WTC11 (cell line): ENCODE measurements at regions of chr9 and their contacts with region 1.

Region 1: GRCh38 chr9:107425101-107426045 is 64.2 kb downstream of the KLF4 start:
- DNase-seq: peak; percentile 79
- ATAC-seq: peak; percentile 76
- H3K4me3 Mint-ChIP-seq: peak overlapping the region; percentile 29; the same call in 1 of the 2 replicates
- H3K27ac Mint-ChIP-seq: no peak overlapping the region
- H3K4me1 Mint-ChIP-seq: peaks cover 5% of the 10 kb centered on the region
- H3K27me3 Mint-ChIP-seq: peaks cover 19% of the 10 kb centered on the region
- CTCF ChIP-seq: peak; percentile 97

Region 2: DNA sequence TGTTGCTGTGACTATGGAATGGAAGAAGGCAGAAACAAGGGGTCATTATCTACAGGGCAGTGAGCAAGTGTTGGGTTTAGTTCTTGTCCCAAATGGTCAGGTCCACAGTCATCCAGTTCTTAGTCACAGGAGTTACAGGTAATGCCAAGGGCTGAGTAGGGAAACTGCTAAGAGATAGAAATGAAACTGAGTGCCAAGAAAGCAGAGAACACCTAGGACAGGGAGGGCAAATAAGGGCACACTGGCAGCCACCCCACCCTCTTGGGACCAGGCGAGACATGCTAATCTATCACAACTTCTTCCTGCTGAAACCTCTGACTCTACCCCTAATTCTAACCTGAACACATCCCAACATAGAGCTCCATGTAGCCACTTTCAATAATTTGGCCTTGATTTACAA is 39.0 kb before region 1 on chr9:
- CTCF ChIA-PET with region 1: interaction called, 10 read pairs
- POLR2A ChIA-PET with region 1: no interaction called
- DNase-seq: no peak
- ATAC-seq: no peak
- H3K4me3 Mint-ChIP-seq: no peak overlapping the region
- H3K27ac Mint-ChIP-seq: no peak overlapping the region
- H3K4me1 Mint-ChIP-seq: no peaks in the 10 kb centered on the region
- H3K27me3 Mint-ChIP-seq: peaks cover 2% of the 10 kb centered on the region
- CTCF ChIP-seq: no peak

Region 3: DNA sequence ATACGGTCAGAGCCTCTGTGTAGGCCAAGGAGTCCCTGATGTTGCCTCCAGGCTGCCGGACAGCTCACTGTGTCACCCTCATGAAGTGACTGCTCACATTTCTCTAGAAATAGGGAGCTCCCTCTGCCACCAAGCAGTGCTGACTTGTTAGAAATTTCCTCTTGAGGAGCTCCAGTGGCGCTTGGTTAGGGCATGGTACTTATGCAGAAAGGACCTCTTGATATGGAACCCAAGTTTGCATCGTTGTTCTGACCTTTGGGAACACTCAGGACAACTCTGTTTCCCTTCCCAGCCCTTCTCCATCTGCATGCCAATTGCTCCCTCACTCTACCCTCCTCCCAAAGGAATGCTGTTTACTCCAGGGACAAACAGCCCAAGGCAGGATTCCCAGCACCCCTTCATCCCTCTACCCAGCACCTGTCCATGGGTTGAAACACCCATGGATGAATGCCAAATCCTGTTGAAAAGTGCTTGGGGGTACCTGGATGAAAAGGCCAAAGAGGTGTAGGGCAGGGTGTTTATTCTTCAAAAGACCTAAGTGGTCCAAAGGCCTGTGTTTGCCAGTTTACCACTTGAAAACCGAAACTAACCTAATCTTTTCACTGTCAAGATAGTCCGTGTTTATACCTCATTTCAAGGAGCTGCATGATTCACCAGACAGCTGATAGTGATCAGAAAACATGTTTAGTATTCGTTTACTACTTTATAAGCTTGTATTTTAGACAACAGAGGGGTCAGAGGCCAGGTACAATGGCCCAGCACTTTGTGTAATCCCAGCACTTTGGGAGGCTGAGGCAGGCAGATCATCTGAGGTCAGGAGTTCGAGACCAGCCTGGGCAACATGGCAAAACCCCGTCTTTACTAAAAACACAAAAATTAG is 13.1 kb after region 1 on chr9:
- CTCF ChIA-PET with region 1: interaction called, 29 read pairs
- POLR2A ChIA-PET with region 1: no interaction called
- DNase-seq: peak; percentile 65
- ATAC-seq: peak; percentile 98
- H3K4me3 Mint-ChIP-seq: no peak overlapping the region
- H3K27ac Mint-ChIP-seq: peak overlapping the region; percentile 98
- H3K4me1 Mint-ChIP-seq: peaks cover 22% of the 10 kb centered on the region
- H3K27me3 Mint-ChIP-seq: no peaks in the 10 kb centered on the region
- CTCF ChIP-seq: no peak

Region 4: DNA sequence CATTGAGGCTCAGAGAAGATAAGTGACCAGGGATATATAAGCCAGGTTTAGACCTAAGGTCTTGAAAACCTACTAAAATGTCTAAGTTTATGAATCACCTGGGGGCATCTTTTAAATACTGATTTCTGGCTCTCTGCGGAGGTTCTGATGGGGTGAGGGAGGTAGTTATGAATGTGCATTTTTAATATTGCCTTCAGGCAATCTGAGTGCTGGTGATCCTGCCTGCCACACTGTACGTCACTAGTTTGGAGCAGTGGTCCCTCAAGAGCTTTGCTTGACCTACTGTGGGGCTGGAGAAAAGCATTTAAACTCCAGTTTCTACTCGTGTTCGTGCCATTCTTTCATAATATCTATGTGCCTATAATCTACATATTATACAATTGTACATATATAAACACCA is 28.1 kb after region 1 on chr9:
- CTCF ChIA-PET with region 1: interaction called, 11 read pairs
- POLR2A ChIA-PET with region 1: no interaction called
- DNase-seq: no peak
- ATAC-seq: no peak
- H3K4me3 Mint-ChIP-seq: no peak overlapping the region
- H3K27ac Mint-ChIP-seq: no peak overlapping the region
- H3K4me1 Mint-ChIP-seq: no peaks in the 10 kb centered on the region
- H3K27me3 Mint-ChIP-seq: 0 out of 2 replicates have a peak, but pooled peaks cover under 1% of the 10 kb centered on the region
- CTCF ChIP-seq: no peak

Region 5: GRCh38 chr9:107465467-107466451 is 40.4 kb after region 1 on chr9:
- CTCF ChIA-PET with region 1: interaction called, 88 read pairs
- POLR2A ChIA-PET with region 1: interaction called, 6 read pairs
- DNase-seq: peak; percentile 79
- ATAC-seq: peak; percentile 98
- H3K4me3 Mint-ChIP-seq: peak overlapping the region; percentile 73
- H3K27ac Mint-ChIP-seq: no peak overlapping the region
- H3K4me1 Mint-ChIP-seq: peaks cover 10% of the 10 kb centered on the region
- H3K27me3 Mint-ChIP-seq: peaks cover 35% of the 10 kb centered on the region
- CTCF ChIP-seq: peak; percentile 74; the same call in 1 of the 2 replicates

Region 6: GRCh38 chr9:107489687-107490605 is 64.6 kb after region 1 on chr9 and contains the start of gene KLF4:
- CTCF ChIA-PET with region 1: interaction called, 52 read pairs
- POLR2A ChIA-PET with region 1: no interaction called
- DNase-seq: peak; percentile 80
- ATAC-seq: peak; percentile 49
- H3K4me3 Mint-ChIP-seq: peak within 1 kb of the TSS; percentile 85
- H3K27ac Mint-ChIP-seq: no peak within 1 kb of the TSS
- H3K4me1 Mint-ChIP-seq: peaks cover 39% of the 10 kb centered on the region
- H3K27me3 Mint-ChIP-seq: peaks cover 61% of the 10 kb centered on the region
- CTCF ChIP-seq: no peak
- total RNA-seq, gene KLF4: 5.9 to 8.9 TPM (median 7.6 TPM) in 3 replicates

Region 7: DNA sequence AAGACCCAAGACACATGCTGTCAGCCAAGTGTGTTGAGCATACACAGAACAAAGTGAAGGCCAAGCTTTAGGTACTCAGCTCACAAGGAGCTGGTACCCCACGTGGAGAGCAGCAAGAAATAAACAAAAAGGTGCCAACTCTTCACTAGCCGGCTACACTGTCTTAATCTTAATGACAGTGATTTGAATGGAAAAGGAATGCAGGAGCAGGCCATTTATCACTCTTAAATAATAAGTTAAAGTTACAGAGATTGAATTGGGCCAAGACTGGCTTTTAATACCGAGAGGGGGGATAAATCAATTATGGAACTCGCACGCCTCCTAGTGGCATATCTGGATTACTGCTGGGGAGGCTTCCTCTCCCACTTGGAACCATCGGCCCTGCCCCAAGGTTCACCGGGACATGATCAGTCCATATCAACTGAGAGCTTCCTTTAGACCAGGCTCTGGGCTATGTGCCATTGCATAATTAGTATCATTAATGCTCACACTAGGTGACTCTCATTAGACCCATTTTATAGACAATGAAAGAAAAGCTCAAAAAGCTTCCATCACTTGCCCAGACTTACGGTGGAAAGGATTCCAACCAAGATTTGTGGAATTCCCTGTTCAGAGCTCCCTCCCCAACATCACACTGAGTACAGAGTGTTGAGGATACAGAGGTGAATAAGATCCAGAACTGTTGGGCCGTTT is 1336.4 kb after region 1 on chr9:
- CTCF ChIA-PET with region 1: interaction called, 12 read pairs
- POLR2A ChIA-PET with region 1: no interaction called
- DNase-seq: peak; percentile 65
- ATAC-seq: peak; percentile 94
- H3K4me3 Mint-ChIP-seq: no peak overlapping the region
- H3K27ac Mint-ChIP-seq: no peak overlapping the region
- H3K4me1 Mint-ChIP-seq: peaks cover 15% of the 10 kb centered on the region
- H3K27me3 Mint-ChIP-seq: no peaks in the 10 kb centered on the region
- CTCF ChIP-seq: peak; percentile 79